Dorsolateral prefrontal cortex (tissue), 120 donors: ENCODE measurements at regions of chr11 and their contacts with region 1.

Region 1: GRCh38 chr11:84103096-84103495 is 816.9 kb upstream of the CCDC90B start:
- DNase-seq: peak in 8 of 10 donors; percentile 39 to 68 (median 60)
- H3K4me3 ChIP-seq: peak overlapping the region in 3 of 59 donors; percentile 3 to 20 (median 8)
- H3K27ac ChIP-seq: peak overlapping the region; percentile 8 to 95 (median 86)
- H3K27me3 ChIP-seq: no peaks in the 10 kb centered on the region
- CTCF ChIP-seq: peak in 2 of 56 donors; percentile 8 to 26

Region 2: GRCh38 chr11:84136926-84137325 is 33.8 kb after region 1 on chr11:
- intact Hi-C with region 1: loop called in 1 of 2 experiments (anchors 5 kb)
- DNase-seq: no peak
- H3K4me3 ChIP-seq: peak overlapping the region in 1 of 59 donors; percentile 1
- H3K27ac ChIP-seq: peak overlapping the region in 55 of 59 donors; percentile 3 to 96 (median 89)
- H3K27me3 ChIP-seq: no peaks in the 10 kb centered on the region
- CTCF ChIP-seq: no peak